ENCODE measurements at regions of chr4 and their contacts with region 1.

Region 1: DNA sequence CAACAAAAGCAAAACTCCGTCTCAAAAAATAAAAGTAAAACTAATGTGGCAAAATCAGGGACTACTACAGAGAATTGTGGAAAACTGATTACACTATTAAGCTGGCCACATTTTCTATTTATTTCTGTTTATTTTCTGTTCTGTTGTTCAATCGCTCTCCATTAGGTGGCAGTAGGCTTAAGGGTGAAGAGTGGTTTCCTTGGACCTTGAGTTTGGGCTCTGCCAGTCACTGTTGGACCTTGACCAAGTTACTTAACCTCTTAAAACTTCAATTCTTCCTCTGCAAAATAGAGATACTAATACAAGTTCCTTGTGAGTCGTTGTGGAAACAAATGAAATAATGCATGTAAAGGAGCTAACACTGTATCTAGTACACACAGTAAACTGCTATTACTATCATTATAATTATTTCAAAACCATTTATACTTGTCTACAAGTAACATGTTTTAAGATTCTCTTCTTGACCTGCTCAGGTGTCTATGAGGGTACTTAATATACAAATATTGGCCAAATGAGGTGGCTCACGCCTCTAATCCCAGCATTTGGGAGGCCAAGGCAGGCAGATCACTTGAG is 15.2 kb downstream of the HSD17B11 start:
- DNase-seq: peak in 2 of 5 donors; percentile 15 to 32
- H3K4me3 ChIP-seq: no peak overlapping the region
- H3K4me3 Mint-ChIP-seq: no peak overlapping the region
- H3K27ac ChIP-seq: no peak overlapping the region
- H3K27ac Mint-ChIP-seq: peak overlapping the region in 2 of 8 donors; percentile 1 to 78
- H3K4me1 ChIP-seq: no peaks in the 10 kb centered on the region
- H3K4me1 Mint-ChIP-seq: peaks cover 4 to 10% (median 8%) of the 10 kb centered on the region in 3 donors
- H3K27me3 ChIP-seq: no peaks in the 10 kb centered on the region
- H3K27me3 Mint-ChIP-seq: no peaks in the 10 kb centered on the region

Region 2: DNA sequence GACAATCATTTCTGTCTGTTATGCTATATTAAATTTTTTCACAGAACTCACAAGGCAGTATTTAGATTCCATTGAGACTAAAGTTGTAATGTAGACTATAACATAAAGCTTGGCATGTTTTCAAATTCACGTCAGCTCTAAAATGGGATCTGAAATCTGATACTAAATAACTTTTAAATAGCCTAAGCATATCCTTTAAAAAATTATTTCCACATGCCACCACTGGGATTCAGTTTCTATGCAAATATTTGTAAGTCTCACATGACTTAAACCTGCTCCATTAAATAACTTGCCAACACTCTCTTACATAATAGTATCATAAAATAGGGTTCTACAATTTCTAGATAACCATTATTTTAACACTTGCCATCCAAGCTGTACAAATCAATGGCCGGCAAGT is 187.8 kb before region 1 on chr4:
- CTCF ChIA-PET with region 1: no interaction called
- POLR2A ChIA-PET with region 1: no interaction called
- DNase-seq: no peak
- H3K4me3 ChIP-seq: no peak overlapping the region
- H3K4me3 Mint-ChIP-seq: no peak overlapping the region
- H3K27ac ChIP-seq: no peak overlapping the region
- H3K27ac Mint-ChIP-seq: no peak overlapping the region
- H3K4me1 ChIP-seq: no peaks in the 10 kb centered on the region
- H3K4me1 Mint-ChIP-seq: peaks cover 0 to 5% (median 0%) of the 10 kb centered on the region in 3 donors
- H3K27me3 ChIP-seq: no peaks in the 10 kb centered on the region
- H3K27me3 Mint-ChIP-seq: no peaks in the 10 kb centered on the region

Region 3: GRCh38 chr4:87363567-87363966 is 12.2 kb before region 1 on chr4:
- CTCF ChIA-PET with region 1: interaction called, 13 read pairs
- POLR2A ChIA-PET with region 1: no interaction called
- DNase-seq: no peak
- H3K4me3 ChIP-seq: no peak overlapping the region
- H3K4me3 Mint-ChIP-seq: no peak overlapping the region
- H3K27ac ChIP-seq: no peak overlapping the region
- H3K27ac Mint-ChIP-seq: peak overlapping the region in 1 of 8 donors; percentile 27
- H3K4me1 ChIP-seq: no peaks in the 10 kb centered on the region
- H3K4me1 Mint-ChIP-seq: peaks cover 0 to 3% (median 1%) of the 10 kb centered on the region in 3 donors
- H3K27me3 ChIP-seq: no peaks in the 10 kb centered on the region
- H3K27me3 Mint-ChIP-seq: no peaks in the 10 kb centered on the region

Region 4: GRCh38 chr4:87390891-87391575 is 15.2 kb after region 1 on chr4 and contains the start of gene HSD17B11:
- CTCF ChIA-PET with region 1: interaction called, 25 read pairs
- POLR2A ChIA-PET with region 1: no interaction called
- DNase-seq: peak; percentile 69 to 89 (median 81)
- H3K4me3 ChIP-seq: peak within 1 kb of the TSS; percentile 97
- H3K4me3 Mint-ChIP-seq: peak within 1 kb of the TSS; percentile 89 to 99 (median 94)
- H3K27ac ChIP-seq: peak within 1 kb of the TSS; percentile 83
- H3K27ac Mint-ChIP-seq: peak within 1 kb of the TSS; percentile 86 to 98 (median 93)
- H3K4me1 ChIP-seq: peaks cover 33% of the 10 kb centered on the region
- H3K4me1 Mint-ChIP-seq: peaks cover 48 to 64% (median 64%) of the 10 kb centered on the region in 3 donors
- H3K27me3 ChIP-seq: no peaks in the 10 kb centered on the region
- H3K27me3 Mint-ChIP-seq: no peaks in the 10 kb centered on the region
- total RNA-seq, gene HSD17B11: 26.7 to 27.0 TPM

Region 5: GRCh38 chr4:87445964-87446363 is 70.2 kb after region 1 on chr4:
- CTCF ChIA-PET with region 1: interaction called, 11 read pairs
- POLR2A ChIA-PET with region 1: no interaction called
- DNase-seq: no peak
- H3K4me3 ChIP-seq: no peak overlapping the region
- H3K4me3 Mint-ChIP-seq: no peak overlapping the region
- H3K27ac ChIP-seq: no peak overlapping the region
- H3K27ac Mint-ChIP-seq: peak overlapping the region in 1 of 8 donors; percentile 61
- H3K4me1 ChIP-seq: no peaks in the 10 kb centered on the region
- H3K4me1 Mint-ChIP-seq: peaks cover 2 to 4% (median 3%) of the 10 kb centered on the region in 3 donors
- H3K27me3 ChIP-seq: no peaks in the 10 kb centered on the region
- H3K27me3 Mint-ChIP-seq: no peaks in the 10 kb centered on the region

Region 6: GRCh38 chr4:87465739-87466366 is 90.0 kb after region 1 on chr4:
- CTCF ChIA-PET with region 1: interaction called, 64 read pairs
- POLR2A ChIA-PET with region 1: no interaction called
- DNase-seq: peak in 2 of 5 donors; percentile 22 to 39
- H3K4me3 ChIP-seq: no peak overlapping the region
- H3K4me3 Mint-ChIP-seq: no peak overlapping the region
- H3K27ac ChIP-seq: no peak overlapping the region
- H3K27ac Mint-ChIP-seq: no peak overlapping the region
- H3K4me1 ChIP-seq: no peaks in the 10 kb centered on the region
- H3K4me1 Mint-ChIP-seq: no peaks in the 10 kb centered on the region
- H3K27me3 ChIP-seq: no peaks in the 10 kb centered on the region
- H3K27me3 Mint-ChIP-seq: no peaks in the 10 kb centered on the region